ENCODE measurements at regions of chr16 and their contacts with region 1.

Region 1: DNA sequence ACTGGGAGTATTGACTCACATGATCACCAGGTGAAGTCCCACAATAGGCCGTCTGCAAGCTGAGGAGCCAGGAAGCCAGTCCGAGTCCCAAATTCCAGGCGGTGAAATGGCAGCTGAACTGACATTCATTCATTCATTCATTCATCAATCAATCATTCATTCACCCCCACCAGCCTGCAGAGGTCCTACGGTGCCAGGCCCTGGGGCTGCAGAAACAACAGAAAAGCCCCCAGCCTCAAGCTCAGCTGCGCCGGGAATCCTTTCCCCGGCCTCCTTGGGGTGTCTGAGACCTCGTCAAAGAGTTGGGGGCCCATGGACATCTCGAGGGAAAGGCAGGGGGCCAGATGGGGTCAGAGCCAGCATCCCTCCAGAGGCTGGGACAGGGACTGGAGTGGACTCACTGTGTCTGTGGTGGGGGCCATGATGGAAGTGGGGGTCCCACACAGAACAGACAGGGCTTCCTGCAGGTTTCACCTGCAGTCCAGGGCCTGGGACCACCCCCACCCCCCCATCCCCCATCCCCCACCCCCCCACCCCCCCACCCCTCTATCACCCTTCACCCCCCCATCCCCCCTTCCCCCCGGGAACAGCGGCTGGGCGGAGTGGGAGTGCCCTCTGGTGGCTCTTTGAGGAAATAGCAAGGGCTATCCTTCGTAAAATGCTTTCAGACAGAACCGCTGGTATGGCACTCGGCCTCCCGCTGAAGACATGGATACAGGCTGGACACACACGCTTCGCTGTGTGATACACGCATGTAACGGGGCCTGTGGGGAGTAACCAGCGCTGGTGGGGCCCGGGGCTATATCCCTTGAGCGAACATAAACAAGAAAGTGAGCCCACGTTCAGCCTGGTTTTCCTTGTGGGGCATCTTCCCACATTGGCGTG is 8.5 kb upstream of the ZC3H18 start:
- DNase-seq: peak in 1 of 2 experiments; percentile 74
- H3K4me3 ChIP-seq: no peak overlapping the region
- H3K27ac ChIP-seq: no peak overlapping the region
- H3K4me1 ChIP-seq: no peaks in the 10 kb centered on the region
- H3K27me3 ChIP-seq: peaks cover 0 to 6% (median 0%) of the 10 kb centered on the region in 4 experiments; a peak in 3 of 7 replicates
- CTCF ChIP-seq: peak; percentile 67 to 81 (median 77)
- EP300 ChIP-seq: no peak
- POLR2A ChIP-seq: no peak
- RAD21 ChIP-seq: peak; percentile 76 to 80

Region 2: DNA sequence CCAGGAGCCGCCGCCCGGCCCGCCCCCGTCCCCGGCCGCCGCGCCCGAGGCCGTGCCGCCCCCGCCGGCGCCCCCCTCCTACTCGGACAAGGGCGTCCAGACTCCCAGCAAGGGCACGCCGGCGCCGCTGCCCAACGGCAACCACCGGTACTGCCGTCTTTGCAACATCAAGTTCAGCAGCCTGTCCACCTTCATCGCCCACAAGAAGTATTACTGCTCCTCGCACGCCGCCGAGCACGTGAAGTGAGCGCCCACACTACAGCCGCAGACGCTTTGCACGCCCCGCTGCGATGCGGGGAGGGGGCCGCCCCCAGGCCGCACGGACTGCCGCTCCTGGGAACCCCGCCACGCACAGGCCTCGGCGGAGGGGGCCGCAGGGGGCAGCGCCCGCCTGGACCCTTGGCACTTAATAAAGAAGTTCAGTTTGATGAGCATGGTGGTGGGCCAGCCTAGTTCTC is 27.0 kb before region 1 on chr16:
- CTCF ChIA-PET with region 1: interaction called, 36 read pairs
- POLR2A ChIA-PET with region 1: no interaction called
- DNase-seq: no peak
- H3K4me3 ChIP-seq: peak overlapping the region; percentile 26 to 87 (median 50); a peak in 7 of 8 replicates
- H3K27ac ChIP-seq: no peak overlapping the region
- H3K4me1 ChIP-seq: peaks cover 0 to 18% (median 8%) of the 10 kb centered on the region in 4 experiments; a peak in 6 of 7 replicates
- H3K27me3 ChIP-seq: no peaks in the 10 kb centered on the region; a peak in 3 of 7 replicates
- CTCF ChIP-seq: no peak
- EP300 ChIP-seq: no peak
- POLR2A ChIP-seq: no peak
- RAD21 ChIP-seq: no peak

Region 3: GRCh38 chr16:88539652-88540345 is 21.9 kb before region 1 on chr16:
- CTCF ChIA-PET with region 1: interaction called, 36 read pairs
- POLR2A ChIA-PET with region 1: no interaction called
- DNase-seq: no peak
- H3K4me3 ChIP-seq: no peak overlapping the region
- H3K27ac ChIP-seq: no peak overlapping the region
- H3K4me1 ChIP-seq: peaks cover 0 to 14% (median 3%) of the 10 kb centered on the region in 4 experiments; a peak in 4 of 7 replicates
- H3K27me3 ChIP-seq: peaks cover 0 to 8% (median 0%) of the 10 kb centered on the region in 4 experiments; a peak in 3 of 7 replicates
- CTCF ChIP-seq: peak in 2 of 3 experiments; percentile 27 to 29; a peak in 2 of 4 replicates
- EP300 ChIP-seq: no peak
- POLR2A ChIP-seq: no peak
- RAD21 ChIP-seq: peak; percentile 30 to 32; a peak in 3 of 4 replicates

Region 4: GRCh38 chr16:88550246-88550661 is 11.5 kb before region 1 on chr16:
- CTCF ChIA-PET with region 1: interaction called, 24 read pairs
- POLR2A ChIA-PET with region 1: interaction called, 3 read pairs
- DNase-seq: no peak
- H3K4me3 ChIP-seq: no peak overlapping the region
- H3K27ac ChIP-seq: no peak overlapping the region
- H3K4me1 ChIP-seq: peaks cover 0 to 8% (median 0%) of the 10 kb centered on the region in 4 experiments; a peak in 1 of 7 replicates
- H3K27me3 ChIP-seq: peaks cover 12 to 31% (median 25%) of the 10 kb centered on the region in 4 experiments
- CTCF ChIP-seq: no peak
- EP300 ChIP-seq: no peak
- POLR2A ChIP-seq: no peak
- RAD21 ChIP-seq: no peak